ENCODE measurements at regions of chr2 and their contacts with region 1.

Region 1: DNA sequence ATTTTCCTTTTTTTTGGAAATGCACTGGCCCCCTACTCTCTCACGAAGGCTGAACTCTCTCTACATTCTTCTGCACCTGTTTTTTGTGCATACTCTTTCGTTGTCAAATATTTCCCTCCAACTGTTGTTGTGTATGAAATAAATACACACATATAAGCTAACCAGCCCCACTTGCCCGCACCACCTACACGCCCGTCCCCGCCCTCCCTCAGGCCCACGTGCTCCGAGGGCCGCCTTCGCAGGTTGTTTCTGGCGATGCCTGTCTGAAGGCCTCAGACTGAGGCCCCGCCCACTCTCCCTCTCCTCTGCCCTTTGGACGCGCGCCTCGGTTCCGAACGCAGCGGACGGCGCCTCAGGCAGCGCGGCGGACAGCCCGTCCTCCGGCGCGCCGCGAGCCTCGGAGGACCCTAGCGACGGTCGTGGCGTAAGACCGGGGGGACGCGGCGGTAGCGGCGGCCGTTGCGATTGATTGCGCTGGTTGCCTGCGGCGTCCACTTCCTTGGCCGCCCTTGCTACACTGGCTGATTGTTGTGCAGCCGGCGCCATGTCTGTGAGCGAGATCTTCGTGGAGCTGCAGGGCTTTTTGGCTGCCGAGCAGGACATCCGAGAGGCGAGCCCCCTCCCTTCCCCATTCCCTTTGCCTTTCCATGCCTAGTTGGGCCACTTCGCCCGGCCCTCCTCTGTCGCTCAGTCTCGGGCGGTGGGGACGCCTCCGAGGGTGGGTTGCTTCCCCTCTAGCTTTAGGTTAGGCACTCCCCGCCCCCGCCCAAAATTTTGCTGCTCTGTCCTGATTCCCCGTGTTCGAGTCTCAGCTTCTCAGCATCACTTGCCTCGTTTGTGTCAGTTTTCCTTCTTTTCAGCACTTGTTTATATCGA is at the start of gene TSN:
- DNase-seq: peak; percentile 81 to 98
- ATAC-seq: peak; percentile 99 to 100
- H3K4me3 ChIP-seq: peak within 1 kb of the TSS; percentile 78
- H3K27ac ChIP-seq: peak within 1 kb of the TSS; percentile 82 to 95
- H3K4me1 ChIP-seq: peaks cover 13% of the 10 kb centered on the region
- CTCF ChIP-seq: no peak
- EP300 ChIP-seq: no peak
- POLR2A ChIP-seq: peak; percentile 70
- RAD21 ChIP-seq: no peak
- polyA plus RNA-seq, gene TSN: 101 and 117 TPM in 2 replicates

Region 2: DNA sequence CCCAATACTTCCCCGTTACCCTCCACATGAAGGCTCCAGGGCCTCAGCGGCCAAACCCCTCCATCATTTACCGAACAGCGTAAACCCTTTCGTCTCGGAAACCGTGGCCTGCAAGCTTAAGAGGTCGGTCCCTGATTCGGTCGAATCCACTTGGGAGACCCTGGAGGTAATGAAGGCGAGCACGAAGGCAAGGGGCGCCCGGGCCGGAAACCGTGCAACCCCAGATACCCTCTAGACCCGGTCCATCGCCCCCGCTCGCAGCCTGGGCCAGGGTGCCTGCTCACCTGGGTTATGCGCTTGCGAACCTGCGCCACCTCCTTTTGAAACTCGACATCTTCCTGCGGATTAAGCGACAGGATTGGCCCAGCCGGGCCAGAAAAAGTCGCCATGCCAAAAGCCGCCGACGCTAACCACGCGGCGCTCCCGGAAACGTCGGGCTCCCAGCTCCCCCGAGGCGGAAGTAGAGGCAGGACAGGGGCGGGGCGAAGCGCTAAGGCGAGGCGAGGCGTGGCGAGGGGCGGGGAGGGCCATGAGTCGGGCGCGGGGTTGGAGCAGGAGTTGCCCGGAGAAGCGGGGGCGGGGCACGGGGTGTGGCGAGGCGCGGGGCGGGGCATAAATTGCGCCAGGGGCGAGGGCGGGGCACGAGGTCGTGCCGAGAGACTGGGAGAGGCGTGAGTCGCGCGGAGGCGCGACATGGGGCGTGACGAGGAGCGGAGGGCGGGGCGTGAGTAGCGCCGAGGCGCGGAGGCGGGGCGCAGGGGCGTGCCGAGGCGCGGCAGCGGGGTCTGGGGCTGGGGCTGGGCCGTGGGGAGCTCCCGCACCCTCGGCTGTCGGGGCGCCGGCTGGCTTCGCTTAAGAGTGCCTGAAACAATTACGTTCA is 18.8 kb before region 1 on chr2 and contains the start of gene NIFK:
- CTCF ChIA-PET with region 1: no interaction called
- POLR2A ChIA-PET with region 1: interaction called, 10 read pairs
- DNase-seq: peak; percentile 84 to 98
- ATAC-seq: peak; percentile 94 to 98
- H3K4me3 ChIP-seq: peak within 1 kb of the TSS; percentile 89
- H3K27ac ChIP-seq: peak within 1 kb of the TSS; percentile 88 to 94
- H3K4me1 ChIP-seq: peaks cover 14% of the 10 kb centered on the region; the same call in 1 of the 3 replicates
- CTCF ChIP-seq: no peak
- EP300 ChIP-seq: no peak
- POLR2A ChIP-seq: peak; percentile 76
- RAD21 ChIP-seq: no peak
- polyA plus RNA-seq, gene NIFK: 55.3 and 82.9 TPM in 2 replicates